ENCODE measurements at regions of chrX and their contacts with region 1.

Region 1: GRCh38 chrX:8971116-8971515 is 62.8 kb downstream of the FAM9B start:
- DNase-seq: peak in 1 of 2 experiments; percentile 31
- H3K4me3 ChIP-seq: no peak overlapping the region
- H3K4me3 Mint-ChIP-seq: no peak overlapping the region
- H3K27ac Mint-ChIP-seq: peak overlapping the region; percentile 53
- H3K4me1 ChIP-seq: peaks cover 23% of the 10 kb centered on the region
- H3K4me1 Mint-ChIP-seq: peaks cover 10% of the 10 kb centered on the region
- H3K27me3 ChIP-seq: no peaks in the 10 kb centered on the region
- H3K27me3 Mint-ChIP-seq: no peaks in the 10 kb centered on the region
- CTCF ChIP-seq: peak; percentile 13 to 14

Region 2: GRCh38 chrX:8832582-8833378 is 138.3 kb before region 1 on chrX:
- CTCF ChIA-PET with region 1: no interaction called
- POLR2A ChIA-PET with region 1: no interaction called
- intact Hi-C with region 1: no loop called
- DNase-seq: no peak
- H3K4me3 ChIP-seq: no peak overlapping the region
- H3K4me3 Mint-ChIP-seq: no peak overlapping the region
- H3K27ac Mint-ChIP-seq: no peak overlapping the region
- H3K4me1 ChIP-seq: no peaks in the 10 kb centered on the region
- H3K4me1 Mint-ChIP-seq: no peaks in the 10 kb centered on the region
- H3K27me3 ChIP-seq: no peaks in the 10 kb centered on the region
- H3K27me3 Mint-ChIP-seq: no peaks in the 10 kb centered on the region
- CTCF ChIP-seq: no peak

Region 3: GRCh38 chrX:8845060-8845459 is 126.1 kb before region 1 on chrX:
- CTCF ChIA-PET with region 1: no interaction called
- POLR2A ChIA-PET with region 1: no interaction called
- intact Hi-C with region 1: loop called (anchors 2 kb)
- DNase-seq: peak; percentile 77 to 84
- H3K4me3 ChIP-seq: peak overlapping the region; percentile 40
- H3K4me3 Mint-ChIP-seq: peak overlapping the region; percentile 77
- H3K27ac Mint-ChIP-seq: peak overlapping the region; percentile 92
- H3K4me1 ChIP-seq: peaks cover 33% of the 10 kb centered on the region
- H3K4me1 Mint-ChIP-seq: peaks cover 16% of the 10 kb centered on the region
- H3K27me3 ChIP-seq: no peaks in the 10 kb centered on the region
- H3K27me3 Mint-ChIP-seq: no peaks in the 10 kb centered on the region
- CTCF ChIP-seq: peak in 1 of 2 experiments; percentile 47

Region 4: GRCh38 chrX:8927701-8928100 is 43.4 kb before region 1 on chrX:
- CTCF ChIA-PET with region 1: no interaction called
- POLR2A ChIA-PET with region 1: no interaction called
- intact Hi-C with region 1: loop called (anchors 2 kb)
- DNase-seq: no peak
- H3K4me3 ChIP-seq: no peak overlapping the region
- H3K4me3 Mint-ChIP-seq: no peak overlapping the region
- H3K27ac Mint-ChIP-seq: no peak overlapping the region
- H3K4me1 ChIP-seq: no peaks in the 10 kb centered on the region
- H3K4me1 Mint-ChIP-seq: peaks cover 6% of the 10 kb centered on the region
- H3K27me3 ChIP-seq: no peaks in the 10 kb centered on the region
- H3K27me3 Mint-ChIP-seq: no peaks in the 10 kb centered on the region
- CTCF ChIP-seq: no peak

Region 5: GRCh38 chrX:9087271-9088040 is 116.3 kb after region 1 on chrX:
- CTCF ChIA-PET with region 1: no interaction called
- POLR2A ChIA-PET with region 1: no interaction called
- intact Hi-C with region 1: no loop called
- DNase-seq: no peak
- H3K4me3 ChIP-seq: no peak overlapping the region
- H3K4me3 Mint-ChIP-seq: no peak overlapping the region
- H3K27ac Mint-ChIP-seq: no peak overlapping the region
- H3K4me1 ChIP-seq: no peaks in the 10 kb centered on the region
- H3K4me1 Mint-ChIP-seq: no peaks in the 10 kb centered on the region
- H3K27me3 ChIP-seq: no peaks in the 10 kb centered on the region
- H3K27me3 Mint-ChIP-seq: no peaks in the 10 kb centered on the region
- CTCF ChIP-seq: no peak

Region 6: DNA sequence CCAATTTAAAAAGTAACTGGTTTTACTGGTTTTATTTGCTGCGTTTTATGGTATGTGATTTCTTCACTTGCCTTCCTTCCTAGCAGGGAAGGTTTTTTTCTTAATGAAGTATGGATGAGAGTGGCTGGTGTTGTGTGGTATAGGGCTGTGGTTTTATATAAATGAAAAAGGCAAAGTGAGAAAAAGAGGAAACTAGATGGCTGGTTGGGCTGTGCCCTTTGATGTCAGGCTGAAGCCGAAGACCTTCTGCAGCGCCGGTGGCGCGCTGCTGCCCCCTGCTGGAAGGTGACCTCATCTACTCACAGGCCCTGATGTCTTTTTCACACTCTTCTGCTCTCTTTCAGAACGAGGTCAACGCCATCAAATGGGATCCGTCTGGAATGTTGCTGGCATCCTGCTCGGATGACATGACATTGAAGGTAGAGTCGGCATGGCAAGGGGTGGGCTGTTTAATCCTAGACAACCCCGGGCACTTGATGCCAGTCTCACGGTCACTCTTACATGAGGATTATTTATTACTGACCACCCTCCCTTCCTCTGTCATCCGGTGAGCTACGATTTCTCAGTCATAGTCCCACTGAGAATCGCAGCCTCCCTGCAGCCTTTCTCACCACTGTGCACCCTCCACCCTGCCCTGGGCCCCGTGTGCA is 737.9 kb after region 1 on chrX:
- CTCF ChIA-PET with region 1: no interaction called
- POLR2A ChIA-PET with region 1: no interaction called
- intact Hi-C with region 1: loop called (anchors 2 kb)
- DNase-seq: peak; percentile 38 to 65
- H3K4me3 ChIP-seq: no peak overlapping the region
- H3K4me3 Mint-ChIP-seq: no peak overlapping the region
- H3K27ac Mint-ChIP-seq: peak overlapping the region; percentile 76
- H3K4me1 ChIP-seq: 0 out of 2 replicates have a peak, but pooled peaks cover 4% of the 10 kb centered on the region
- H3K4me1 Mint-ChIP-seq: peaks cover 17% of the 10 kb centered on the region
- H3K27me3 ChIP-seq: no peaks in the 10 kb centered on the region
- H3K27me3 Mint-ChIP-seq: no peaks in the 10 kb centered on the region
- CTCF ChIP-seq: peak; percentile 76 to 78